ENCODE measurements at regions of chr3 and their contacts with region 1.

Region 1: GRCh38 chr3:195001961-195002861 is 268.7 kb downstream of the XXYLT1 start:
- DNase-seq: peak; percentile 87
- H3K4me3 ChIP-seq: no peak overlapping the region
- H3K27ac ChIP-seq: peak overlapping the region in 1 of 8 donors; percentile 32
- H3K4me1 ChIP-seq: peaks cover 0 to 29% (median 11%) of the 10 kb centered on the region in 6 donors
- H3K27me3 ChIP-seq: no peaks in the 10 kb centered on the region
- CTCF ChIP-seq: peak; percentile 40 to 76 (median 66)
- POLR2A ChIP-seq: no peak

Region 2: GRCh38 chr3:195106418-195106906 is 104.3 kb after region 1 on chr3:
- intact Hi-C with region 1: loop called (anchors 10 kb)
- DNase-seq: peak; percentile 94
- H3K4me3 ChIP-seq: peak overlapping the region in 1 of 8 donors; percentile 53
- H3K27ac ChIP-seq: peak overlapping the region in 4 of 8 donors; percentile 28 to 41 (median 34)
- H3K4me1 ChIP-seq: peaks cover 6 to 60% (median 28%) of the 10 kb centered on the region in 6 donors
- H3K27me3 ChIP-seq: no peaks in the 10 kb centered on the region
- CTCF ChIP-seq: peak; percentile 97 to 100 (median 99)
- POLR2A ChIP-seq: no peak

Region 3: GRCh38 chr3:195117978-195118581 is 115.9 kb after region 1 on chr3:
- intact Hi-C with region 1: no loop called
- DNase-seq: no peak
- H3K4me3 ChIP-seq: no peak overlapping the region
- H3K27ac ChIP-seq: no peak overlapping the region
- H3K4me1 ChIP-seq: peaks cover 0 to 31% (median 13%) of the 10 kb centered on the region in 6 donors
- H3K27me3 ChIP-seq: no peaks in the 10 kb centered on the region
- CTCF ChIP-seq: peak in 4 of 11 experiments; percentile 4 to 25 (median 18)
- POLR2A ChIP-seq: no peak